ENCODE measurements at regions of chrX and their contacts with region 1.

Region 1: DNA sequence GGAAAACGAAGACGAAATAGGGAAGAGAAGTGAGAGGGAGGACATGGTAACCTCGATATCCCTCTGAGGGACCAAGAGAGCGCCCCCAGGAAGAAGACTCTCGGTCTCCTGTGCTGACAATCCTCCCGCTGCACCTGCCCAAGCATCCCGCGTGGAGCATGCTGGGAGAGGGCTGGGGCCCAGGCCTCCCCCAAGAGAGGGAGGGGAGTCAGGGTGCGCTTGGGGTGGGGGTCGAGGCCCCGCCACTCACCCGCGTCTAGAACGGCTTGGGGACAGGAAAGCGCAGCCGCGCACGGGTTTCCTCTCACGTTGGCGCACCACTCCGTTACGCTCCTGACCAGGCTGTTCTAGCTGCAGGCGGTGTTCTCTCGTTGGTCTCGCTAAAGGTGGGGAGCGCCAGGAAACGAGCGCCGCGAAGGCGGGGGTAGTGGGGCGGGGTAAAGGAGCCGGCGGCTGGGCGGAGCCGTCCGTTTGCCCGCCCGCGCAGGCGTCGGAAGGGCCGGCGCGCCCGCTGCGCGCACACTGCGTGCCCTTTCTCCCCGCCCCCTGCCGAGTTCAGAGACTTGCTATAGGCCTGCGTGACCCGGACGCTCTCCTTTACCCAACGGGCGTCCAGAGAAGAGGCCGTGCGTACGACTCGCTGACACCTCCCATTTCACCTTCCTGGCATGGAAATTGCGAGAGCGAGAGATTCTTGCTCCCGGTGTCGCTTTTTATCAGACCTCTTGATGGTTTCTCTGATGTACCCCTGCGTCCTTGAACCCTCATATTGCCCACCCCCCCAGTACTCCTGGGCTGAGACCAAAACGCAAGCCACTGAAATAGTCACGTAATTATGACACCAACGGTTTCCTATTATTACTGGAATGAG is at the start of gene C1GALT1C1:
- DNase-seq: peak; percentile 87 to 93
- ATAC-seq: peak; percentile 97 to 98
- H3K4me3 ChIP-seq: peak within 1 kb of the TSS; percentile 64 to 76 (median 70)
- H3K27ac ChIP-seq: peak within 1 kb of the TSS; percentile 88 to 94 (median 91)
- H3K4me1 ChIP-seq: no peaks in the 10 kb centered on the region
- H3K27me3 ChIP-seq: no peaks in the 10 kb centered on the region
- CTCF ChIP-seq: no peak
- POLR2A ChIP-seq: peak; percentile 59 to 68
- total RNA-seq, gene C1GALT1C1: 6.5 to 13.5 (median 10.2) TPM

Region 2: GRCh38 chrX:120603707-120604360 is 26.1 kb before region 1 on chrX and contains the start of gene MCTS1:
- in situ Hi-C with region 1: no loop called
- intact Hi-C with region 1: loop called (anchors 1 kb)
- DNase-seq: peak; percentile 69 to 84
- ATAC-seq: peak; percentile 95 to 97
- H3K4me3 ChIP-seq: peak within 1 kb of the TSS; percentile 67 to 77 (median 68)
- H3K27ac ChIP-seq: peak within 1 kb of the TSS; percentile 84 to 94 (median 93)
- H3K4me1 ChIP-seq: peaks cover 7 to 14% of the 10 kb centered on the region in 2 donors
- H3K27me3 ChIP-seq: no peaks in the 10 kb centered on the region
- CTCF ChIP-seq: no peak
- POLR2A ChIP-seq: peak; percentile 66 to 69
- total RNA-seq, gene MCTS1: 15.9 to 32.4 (median 26.0) TPM